Dendritic cell treated with granulocyte-macrophage colony-stimulating factor and Interleukin-4, amounts not matched to agents 40 ng/mL and 50 ng/mL, for 4 days (primary cell): ENCODE measurements at regions of chr1 and their contacts with region 1.

Region 1: GRCh38 chr1:11979851-11980675 is at the start of gene MFN2:
- H3K4me3 Mint-ChIP-seq: peak within 1 kb of the TSS; percentile 94
- H3K27ac Mint-ChIP-seq: peak within 1 kb of the TSS; percentile 97
- H3K4me1 Mint-ChIP-seq: peaks cover 62% of the 10 kb centered on the region
- H3K27me3 Mint-ChIP-seq: no peaks in the 10 kb centered on the region

Region 2: GRCh38 chr1:11831945-11832725 is 147.9 kb before region 1 on chr1:
- intact Hi-C with region 1: no loop called
- H3K4me3 Mint-ChIP-seq: no peak overlapping the region
- H3K27ac Mint-ChIP-seq: peak overlapping the region; percentile 48
- H3K4me1 Mint-ChIP-seq: peaks cover 17% of the 10 kb centered on the region
- H3K27me3 Mint-ChIP-seq: no peaks in the 10 kb centered on the region

Region 3: DNA sequence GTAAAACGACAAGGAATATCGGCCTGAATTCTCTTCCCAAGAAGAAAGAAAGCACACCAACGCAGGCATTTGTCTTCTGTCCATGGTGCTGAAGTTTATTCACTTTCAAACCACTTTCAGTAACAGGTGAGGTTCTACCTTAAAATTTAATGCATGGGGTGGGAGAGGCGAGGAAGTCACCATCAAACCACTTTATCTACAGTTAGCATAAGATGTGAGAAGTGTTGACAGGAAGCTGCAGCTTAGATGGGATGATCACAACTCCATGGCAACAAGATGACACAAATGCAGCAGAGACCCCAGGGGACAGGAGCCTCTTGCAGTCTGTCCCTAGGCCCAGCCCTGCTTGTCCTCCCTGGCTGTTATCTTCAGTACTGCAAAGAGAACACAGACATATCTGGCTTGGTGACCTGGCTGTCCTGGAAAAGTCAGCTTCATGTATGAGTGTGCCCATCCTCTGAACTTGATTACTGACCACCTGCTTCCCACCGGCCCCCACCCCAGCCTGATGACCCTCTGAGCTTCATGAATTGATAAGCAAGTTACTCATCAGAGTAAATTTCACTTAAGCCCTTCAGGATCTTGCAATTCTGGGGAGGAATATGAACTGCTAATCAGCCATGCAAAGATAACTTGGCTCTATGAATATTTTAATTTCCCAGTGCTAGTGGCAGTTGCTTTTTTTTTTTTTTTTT is 134.3 kb before region 1 on chr1:
- intact Hi-C with region 1: no loop called
- H3K4me3 Mint-ChIP-seq: no peak overlapping the region
- H3K27ac Mint-ChIP-seq: no peak overlapping the region
- H3K4me1 Mint-ChIP-seq: peaks cover 46% of the 10 kb centered on the region
- H3K27me3 Mint-ChIP-seq: no peaks in the 10 kb centered on the region

Region 4: DNA sequence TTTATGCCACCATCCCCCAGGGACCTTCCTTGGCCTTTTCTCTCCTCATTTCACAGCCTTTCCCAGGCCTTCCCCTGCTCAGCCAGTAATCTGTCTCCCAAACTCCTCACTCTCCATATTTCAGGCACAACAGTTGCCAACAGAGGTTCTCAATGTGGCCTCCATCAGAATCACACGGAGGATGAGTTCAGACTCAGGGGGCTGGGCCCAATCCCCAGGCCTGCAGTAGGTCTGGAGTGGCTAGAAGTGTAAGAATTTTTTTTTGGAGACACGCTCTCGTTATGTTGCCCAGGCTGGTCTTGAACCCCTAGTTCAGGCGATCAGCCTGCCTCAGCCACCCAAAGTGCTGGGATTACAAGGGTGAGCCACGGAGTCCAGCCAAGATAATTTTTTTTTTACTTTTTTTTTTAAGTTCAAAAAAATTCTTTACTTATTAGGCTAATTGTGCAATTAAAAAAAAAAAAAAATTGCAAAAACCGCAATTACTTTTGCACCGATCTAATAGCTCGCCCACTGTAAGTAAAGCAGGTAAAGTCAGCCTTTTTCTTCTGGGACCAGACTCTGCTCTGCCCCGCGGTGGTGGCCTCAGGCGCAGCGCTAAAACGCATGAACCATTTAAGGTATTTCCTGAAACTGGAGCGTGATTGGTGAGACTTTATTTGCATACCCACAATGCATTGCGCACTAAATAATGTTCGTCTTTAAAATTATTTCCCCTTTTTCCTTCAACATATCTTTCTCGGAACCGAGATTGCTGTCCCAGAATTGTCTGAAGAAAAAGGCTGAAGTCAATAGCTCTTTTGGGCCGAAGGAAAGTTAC is 72.6 kb before region 1 on chr1:
- intact Hi-C with region 1: loop called (anchors 2 kb)
- H3K4me3 Mint-ChIP-seq: peak overlapping the region; percentile 82
- H3K27ac Mint-ChIP-seq: peak overlapping the region; percentile 98
- H3K4me1 Mint-ChIP-seq: peaks cover 23% of the 10 kb centered on the region
- H3K27me3 Mint-ChIP-seq: peaks cover 4% of the 10 kb centered on the region

Region 5: DNA sequence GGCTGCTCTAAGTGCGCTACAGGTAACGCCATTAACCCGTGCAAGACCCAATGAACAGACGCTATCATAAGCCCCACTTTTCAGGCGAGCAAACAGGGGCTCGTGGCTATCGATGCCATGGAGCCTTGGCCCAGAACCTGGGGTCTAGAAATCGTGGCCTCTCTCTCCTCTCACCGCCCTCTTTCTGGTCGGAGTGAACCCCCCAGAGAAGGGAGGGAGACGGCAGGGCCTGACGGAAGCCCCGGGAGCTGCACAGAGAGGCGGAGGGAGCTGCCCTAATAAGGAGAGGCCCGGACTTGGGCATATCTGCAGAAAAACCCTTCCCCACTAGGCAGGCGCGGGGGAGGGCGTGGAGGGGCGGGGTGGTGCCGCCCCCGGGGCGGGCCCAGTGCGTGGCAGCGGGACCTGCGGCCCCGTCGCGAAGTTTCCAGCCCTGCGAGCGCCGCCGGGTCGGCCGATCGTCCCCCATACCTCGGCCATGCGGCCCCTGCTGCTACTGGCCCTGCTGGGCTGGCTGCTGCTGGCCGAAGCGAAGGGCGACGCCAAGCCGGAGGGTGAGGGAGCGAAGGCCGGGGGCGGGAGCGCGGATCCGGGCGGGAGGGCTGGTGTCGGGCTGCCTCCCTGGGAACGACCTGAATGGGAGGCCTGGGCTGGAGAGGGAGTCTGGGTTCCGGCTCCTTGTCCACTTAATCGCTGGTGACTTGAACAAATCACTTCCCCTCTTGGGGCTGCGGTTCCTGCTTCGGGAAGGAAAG is 45.6 kb before region 1 on chr1 and contains the start of gene PLOD1:
- intact Hi-C with region 1: loop called (anchors 5 kb)
- H3K4me3 Mint-ChIP-seq: peak within 1 kb of the TSS; percentile 83
- H3K27ac Mint-ChIP-seq: peak within 1 kb of the TSS; percentile 85
- H3K4me1 Mint-ChIP-seq: peaks cover 43% of the 10 kb centered on the region
- H3K27me3 Mint-ChIP-seq: no peaks in the 10 kb centered on the region

Region 6: GRCh38 chr1:11948822-11949458 is 31.1 kb before region 1 on chr1:
- intact Hi-C with region 1: no loop called
- H3K4me3 Mint-ChIP-seq: no peak overlapping the region
- H3K27ac Mint-ChIP-seq: no peak overlapping the region
- H3K4me1 Mint-ChIP-seq: no peaks in the 10 kb centered on the region
- H3K27me3 Mint-ChIP-seq: no peaks in the 10 kb centered on the region

Region 7: DNA sequence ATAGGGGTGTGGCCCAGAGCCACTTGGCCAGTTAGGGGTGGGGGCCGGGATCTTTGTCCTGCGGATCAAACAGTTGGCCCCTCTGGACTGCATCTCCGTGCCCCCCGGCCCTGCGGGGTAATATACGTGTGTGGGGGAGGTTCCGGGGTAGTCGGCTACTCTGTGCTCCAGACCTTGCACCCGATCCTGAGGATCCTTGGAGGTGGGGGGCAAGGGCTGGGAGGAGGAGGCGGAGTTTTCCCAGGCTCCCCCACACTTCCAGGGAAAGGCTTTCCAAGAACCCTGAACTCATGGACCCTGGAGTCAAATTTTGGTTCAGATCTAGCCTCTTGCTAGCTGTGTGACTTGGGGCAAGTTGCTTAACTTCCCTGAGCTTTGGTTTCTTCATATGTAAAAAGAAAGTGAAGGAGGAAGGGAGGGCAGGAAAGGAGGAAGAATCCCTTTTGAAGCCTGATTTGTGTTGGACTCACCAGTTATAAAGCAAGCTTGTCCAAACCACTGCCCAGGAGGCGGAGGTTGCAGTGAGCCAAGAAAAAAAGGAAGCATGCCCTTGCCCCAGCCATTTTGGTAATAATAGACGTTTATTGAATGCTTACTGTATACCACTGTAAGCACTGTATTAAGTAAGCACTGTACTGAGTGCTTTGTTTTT is 39.9 kb after region 1 on chr1:
- intact Hi-C with region 1: loop called (anchors 1 kb)
- H3K4me3 Mint-ChIP-seq: peak overlapping the region; percentile 82
- H3K27ac Mint-ChIP-seq: peak overlapping the region; percentile 87
- H3K4me1 Mint-ChIP-seq: peaks cover 16% of the 10 kb centered on the region
- H3K27me3 Mint-ChIP-seq: no peaks in the 10 kb centered on the region